ENCODE measurements at regions of chr4 and their contacts with region 1.

Region 1: GRCh38 chr4:7365462-7366179 is 69.1 kb downstream of the PSAPL1 start:
- DNase-seq: peak; percentile 63
- ATAC-seq: peak; percentile 84

Region 2: DNA sequence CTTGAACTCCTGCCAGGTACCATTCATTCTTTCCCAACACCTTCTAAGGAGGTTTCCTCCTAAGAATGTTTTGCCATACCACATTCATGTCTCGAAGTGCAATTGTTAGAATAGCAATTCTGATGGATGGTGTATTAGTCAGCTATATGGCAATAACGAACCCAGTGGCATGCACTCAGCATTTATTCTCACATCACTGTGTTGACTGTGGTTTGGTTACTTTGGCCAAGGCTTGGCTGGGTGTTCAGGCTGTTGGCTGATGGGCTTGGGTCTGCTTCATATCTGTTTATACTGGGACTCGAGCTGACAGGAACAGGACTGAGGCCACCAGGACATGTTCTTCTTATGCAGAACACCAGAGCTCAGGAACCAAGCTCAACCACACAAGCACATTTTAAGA is 37.4 kb after region 1 on chr4:
- intact Hi-C with region 1: loop called (anchors 1 kb)
- DNase-seq: peak; percentile 45
- ATAC-seq: peak; percentile 90

Region 3: GRCh38 chr4:7498446-7499200 is 133.0 kb after region 1 on chr4:
- intact Hi-C with region 1: no loop called
- DNase-seq: no peak
- ATAC-seq: no peak

Region 4: DNA sequence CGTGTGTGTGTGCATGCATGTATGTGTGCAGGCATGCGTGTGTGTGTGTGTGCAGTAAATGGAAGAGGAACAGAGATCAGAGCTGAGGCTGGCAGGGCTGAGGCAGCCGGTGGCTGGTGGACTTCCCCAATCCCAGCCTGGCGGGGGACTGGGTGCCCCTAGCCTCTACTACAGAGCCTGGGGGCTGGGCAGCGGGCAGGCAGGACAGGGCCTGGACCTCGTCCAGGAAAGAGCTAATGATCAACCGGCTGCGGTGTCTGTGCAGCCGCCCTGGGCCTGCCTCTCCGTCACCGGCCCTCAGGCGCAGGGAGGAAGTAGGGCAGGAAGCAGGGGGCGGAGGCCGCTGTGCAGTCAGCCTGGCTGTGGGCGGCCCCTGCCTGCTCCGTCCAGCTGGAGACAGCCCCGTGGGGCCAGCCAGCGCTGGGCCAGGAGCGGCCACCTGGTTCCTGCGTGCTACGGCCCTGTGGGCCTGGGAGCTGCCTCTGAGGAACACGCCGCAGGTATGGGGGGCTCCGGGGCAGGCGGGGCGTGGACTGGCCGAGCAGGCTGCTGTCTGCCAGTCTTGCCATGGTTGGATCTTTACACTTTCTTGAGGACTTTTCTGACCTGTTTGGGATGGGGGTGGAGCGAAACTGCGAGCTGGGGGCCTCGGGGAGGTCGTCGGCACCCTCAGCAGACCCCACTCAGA is 833.4 kb after region 1 on chr4 and contains the start of gene SH3TC1:
- intact Hi-C with region 1: no loop called
- DNase-seq: peak; percentile 95
- ATAC-seq: peak; percentile 92
- total RNA-seq, gene SH3TC1: 11.2 TPM

Measured in Right ventricle myocardium inferior (tissue), 1 donor.